Naive thymus-derived CD4-positive, alpha-beta T cell (primary cell): ENCODE measurements at regions of chr15 and their contacts with region 1.

Region 1: GRCh38 chr15:90412356-90413194 is 24.5 kb downstream of the IQGAP1 start:
- DNase-seq: no peak
- ATAC-seq: peak; percentile 78
- H3K4me3 ChIP-seq: no peak overlapping the region
- H3K4me3 Mint-ChIP-seq: peak overlapping the region; percentile 2 to 69 (median 57)
- H3K27ac ChIP-seq: no peak overlapping the region
- H3K27ac Mint-ChIP-seq: peak overlapping the region; percentile 1 to 79 (median 39)
- H3K4me1 ChIP-seq: peaks cover 30 to 31% of the 10 kb centered on the region in 2 donors
- H3K4me1 Mint-ChIP-seq: peaks cover 64 to 87% (median 80%) of the 10 kb centered on the region in 7 donors
- H3K27me3 ChIP-seq: no peaks in the 10 kb centered on the region
- H3K27me3 Mint-ChIP-seq: no peaks in the 10 kb centered on the region

Region 2: GRCh38 chr15:88590759-88591158 is 1821.8 kb before region 1 on chr15:
- CTCF ChIA-PET with region 1: no interaction called
- POLR2A ChIA-PET with region 1: no interaction called
- intact Hi-C with region 1: no loop called
- DNase-seq: no peak
- ATAC-seq: no peak
- H3K4me3 ChIP-seq: no peak overlapping the region
- H3K4me3 Mint-ChIP-seq: no peak overlapping the region
- H3K27ac ChIP-seq: no peak overlapping the region
- H3K27ac Mint-ChIP-seq: no peak overlapping the region
- H3K4me1 ChIP-seq: no peaks in the 10 kb centered on the region
- H3K4me1 Mint-ChIP-seq: peaks cover 0 to 1% (median 0%) of the 10 kb centered on the region in 7 donors
- H3K27me3 ChIP-seq: no peaks in the 10 kb centered on the region
- H3K27me3 Mint-ChIP-seq: peaks cover 0 to 25% (median 3%) of the 10 kb centered on the region in 5 donors

Region 3: DNA sequence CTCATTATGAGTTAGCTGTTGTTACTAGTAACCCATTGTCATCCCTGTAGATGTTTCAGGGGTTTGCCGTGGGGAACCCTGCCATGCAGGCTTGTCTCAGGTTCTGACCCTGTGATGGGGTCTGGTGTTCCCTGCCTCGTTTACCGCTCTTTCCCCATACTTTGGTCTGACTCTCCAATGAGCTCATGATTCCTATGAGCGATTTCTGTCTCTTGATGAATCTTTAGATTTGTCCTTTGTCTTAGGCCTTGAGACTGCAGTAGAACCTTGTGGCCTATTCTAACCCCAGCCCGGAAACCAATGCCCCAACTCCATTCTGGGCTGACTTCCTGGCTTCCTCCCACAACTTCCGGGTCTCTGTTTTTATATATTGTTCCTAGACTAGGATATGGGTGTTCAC is 35.8 kb before region 1 on chr15:
- CTCF ChIA-PET with region 1: no interaction called
- POLR2A ChIA-PET with region 1: no interaction called
- intact Hi-C with region 1: loop called in 1 of 2 experiments (anchors 5 kb)
- DNase-seq: peak in 8 of 9 donors; percentile 58 to 81 (median 74)
- ATAC-seq: peak; percentile 98
- H3K4me3 ChIP-seq: peak overlapping the region; percentile 11
- H3K4me3 Mint-ChIP-seq: peak overlapping the region; percentile 66 to 87 (median 72)
- H3K27ac ChIP-seq: no peak overlapping the region
- H3K27ac Mint-ChIP-seq: peak overlapping the region; percentile 7 to 92 (median 56)
- H3K4me1 ChIP-seq: peaks cover 32 to 35% of the 10 kb centered on the region in 2 donors
- H3K4me1 Mint-ChIP-seq: peaks cover 24 to 59% (median 48%) of the 10 kb centered on the region in 7 donors
- H3K27me3 ChIP-seq: no peaks in the 10 kb centered on the region
- H3K27me3 Mint-ChIP-seq: no peaks in the 10 kb centered on the region